CD4-positive, alpha-beta memory T cell (primary cell): ENCODE measurements at regions of chr2 and their contacts with region 1.

Region 1: GRCh38 chr2:197538412-197538811 is 22.5 kb downstream of the MOB4 start:
- DNase-seq: no peak
- H3K4me3 ChIP-seq: no peak overlapping the region
- H3K4me3 Mint-ChIP-seq: no peak overlapping the region
- H3K27ac ChIP-seq: no peak overlapping the region
- H3K27ac Mint-ChIP-seq: peak overlapping the region in 4 of 7 donors; percentile 1 to 74 (median 57)
- H3K4me1 ChIP-seq: peaks cover 23% of the 10 kb centered on the region
- H3K4me1 Mint-ChIP-seq: peaks cover 25 to 41% (median 32%) of the 10 kb centered on the region in 4 donors
- H3K27me3 ChIP-seq: no peaks in the 10 kb centered on the region
- H3K27me3 Mint-ChIP-seq: no peaks in the 10 kb centered on the region

Region 2: DNA sequence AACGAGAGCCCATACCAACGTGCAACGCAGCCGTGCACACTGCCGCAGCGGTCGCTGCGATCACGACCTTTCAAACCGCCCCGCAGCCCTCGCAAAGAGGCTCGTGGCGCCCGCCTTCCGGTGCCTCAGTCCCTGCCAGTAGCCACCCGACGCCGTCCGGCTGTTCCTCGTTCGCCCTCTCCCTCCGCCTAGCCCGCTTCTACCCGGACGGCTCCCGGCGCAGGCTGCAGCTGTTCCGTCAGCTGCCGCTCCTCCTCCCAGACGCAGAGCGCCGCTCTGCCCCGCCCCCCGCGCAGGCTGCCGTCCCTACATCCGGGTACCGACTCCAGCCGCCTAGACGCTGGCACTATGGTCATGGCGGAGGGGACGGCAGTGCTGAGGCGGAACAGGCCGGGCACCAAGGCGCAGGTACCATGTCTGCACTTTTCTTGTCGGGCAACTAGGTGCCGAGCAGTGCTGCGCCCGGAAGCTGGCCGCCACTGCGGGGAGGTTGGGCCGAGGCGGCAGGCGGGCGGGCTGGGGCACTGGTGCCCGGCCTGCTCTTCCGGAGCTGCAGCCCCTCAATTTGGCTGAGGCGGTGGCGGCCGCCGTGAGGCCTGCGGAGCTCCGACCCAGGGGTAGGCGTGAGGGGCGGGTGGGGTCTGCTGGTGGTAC is 22.5 kb before region 1 on chr2 and contains the start of gene MOB4:
- CTCF ChIA-PET with region 1: no interaction called
- POLR2A ChIA-PET with region 1: interaction called, 3 read pairs
- intact Hi-C with region 1: loop called (anchors 2 kb)
- DNase-seq: peak; percentile 92 to 94 (median 93)
- H3K4me3 ChIP-seq: peak within 1 kb of the TSS; percentile 88 to 93
- H3K4me3 Mint-ChIP-seq: peak within 1 kb of the TSS; percentile 86 to 99 (median 94)
- H3K27ac ChIP-seq: peak within 1 kb of the TSS; percentile 95
- H3K27ac Mint-ChIP-seq: peak within 1 kb of the TSS; percentile 92 to 98 (median 97)
- H3K4me1 ChIP-seq: peaks cover 33% of the 10 kb centered on the region
- H3K4me1 Mint-ChIP-seq: peaks cover 18 to 59% (median 33%) of the 10 kb centered on the region in 4 donors
- H3K27me3 ChIP-seq: no peaks in the 10 kb centered on the region
- H3K27me3 Mint-ChIP-seq: no peaks in the 10 kb centered on the region
- total RNA-seq, gene MOB4: 20.2 to 21.8 TPM

Region 3: DNA sequence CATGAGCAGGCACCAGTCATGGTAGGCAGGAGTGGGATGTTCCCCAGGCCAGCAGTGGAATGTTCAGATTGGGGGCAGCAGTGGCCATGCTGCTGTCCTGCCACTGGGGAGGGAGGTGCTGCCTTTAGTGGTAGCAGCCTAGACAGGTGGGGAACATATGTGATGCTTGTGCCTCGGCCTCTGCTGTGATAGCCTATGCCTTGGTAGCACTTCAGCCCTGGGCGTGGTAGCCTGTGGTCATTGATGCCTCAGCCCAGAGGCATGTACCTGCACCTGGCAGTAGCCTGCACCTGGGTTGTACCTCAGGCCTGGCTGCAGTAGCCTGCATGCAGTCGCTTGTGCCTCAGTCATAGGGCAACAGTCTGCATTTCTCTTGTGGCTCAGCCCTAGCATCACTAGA is 129.9 kb after region 1 on chr2:
- CTCF ChIA-PET with region 1: no interaction called
- POLR2A ChIA-PET with region 1: no interaction called
- intact Hi-C with region 1: no loop called
- DNase-seq: no peak
- H3K4me3 ChIP-seq: no peak overlapping the region
- H3K4me3 Mint-ChIP-seq: no peak overlapping the region
- H3K27ac ChIP-seq: no peak overlapping the region
- H3K27ac Mint-ChIP-seq: no peak overlapping the region
- H3K4me1 ChIP-seq: no peaks in the 10 kb centered on the region
- H3K4me1 Mint-ChIP-seq: no peaks in the 10 kb centered on the region
- H3K27me3 ChIP-seq: no peaks in the 10 kb centered on the region
- H3K27me3 Mint-ChIP-seq: peaks cover 8 to 9% of the 10 kb centered on the region in 2 donors